GM12878 (cell line): ENCODE measurements at regions of chr1 and their contacts with region 1.

Region 1: DNA sequence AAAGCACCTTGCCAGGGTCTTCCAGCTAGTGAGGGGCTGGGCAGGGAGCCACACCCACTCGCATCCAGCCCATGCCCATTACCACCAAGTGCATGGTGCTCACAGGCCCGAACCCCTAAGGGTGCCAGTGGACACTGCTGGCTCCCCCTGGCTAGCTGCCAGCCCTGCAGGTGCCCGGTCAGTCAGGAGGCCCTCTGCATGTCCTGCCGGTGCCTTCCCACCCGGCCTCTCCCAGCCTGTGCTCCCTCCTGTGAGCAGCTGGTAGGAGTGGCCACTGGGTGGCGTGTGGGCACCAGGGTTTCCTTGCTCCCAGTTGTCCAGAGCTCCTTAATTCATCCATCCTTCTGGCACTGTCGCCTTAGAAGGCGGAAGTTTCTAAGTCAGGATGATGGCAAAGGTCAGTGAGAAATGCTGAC is 33.4 kb downstream of the QSOX1 start:
- DNase-seq: no peak
- ATAC-seq: peak; percentile 81
- H3K4me3 ChIP-seq: no peak overlapping the region
- H3K27ac ChIP-seq: no peak overlapping the region
- H3K4me1 ChIP-seq: no peaks in the 10 kb centered on the region
- H3K27me3 ChIP-seq: no peaks in the 10 kb centered on the region
- CTCF ChIP-seq: peak; percentile 51 to 65 (median 54); a peak in 5 of 6 replicates
- EP300 ChIP-seq: no peak
- POLR2A ChIP-seq: no peak
- RAD21 ChIP-seq: peak; percentile 73

Region 2: DNA sequence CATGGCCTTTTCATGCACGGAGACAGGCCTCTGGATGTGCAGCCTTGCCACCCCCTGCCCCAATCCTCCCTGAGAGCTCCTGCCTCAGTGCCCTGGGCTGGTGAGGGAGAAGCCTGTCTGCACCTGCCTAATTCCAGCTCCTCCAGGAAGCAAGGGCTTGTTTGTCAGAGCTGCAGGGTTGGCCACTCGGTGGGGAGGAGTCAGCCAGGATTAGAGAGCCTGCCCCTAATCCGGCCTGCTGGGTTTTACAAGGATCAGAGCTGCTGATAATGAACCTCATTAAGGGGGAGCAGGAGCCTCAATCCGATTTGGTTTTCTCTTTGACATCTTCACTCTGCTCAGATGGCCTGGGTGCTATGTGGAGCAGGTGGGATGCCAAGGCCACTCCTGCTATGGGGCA is 10.1 kb after region 1 on chr1:
- CTCF ChIA-PET with region 1: interaction called, 10 read pairs
- POLR2A ChIA-PET with region 1: no interaction called
- RAD21 ChIA-PET with region 1: no interaction called
- SMC1A ChIA-PET with region 1: interaction called, 4 read pairs
- in situ Hi-C with region 1: no loop called
- intact Hi-C with region 1: no loop called
- DNase-seq: no peak
- ATAC-seq: no peak
- H3K4me3 ChIP-seq: no peak overlapping the region
- H3K27ac ChIP-seq: no peak overlapping the region
- H3K4me1 ChIP-seq: no peaks in the 10 kb centered on the region
- H3K27me3 ChIP-seq: no peaks in the 10 kb centered on the region
- CTCF ChIP-seq: no peak
- EP300 ChIP-seq: no peak
- POLR2A ChIP-seq: no peak
- RAD21 ChIP-seq: no peak

Region 3: DNA sequence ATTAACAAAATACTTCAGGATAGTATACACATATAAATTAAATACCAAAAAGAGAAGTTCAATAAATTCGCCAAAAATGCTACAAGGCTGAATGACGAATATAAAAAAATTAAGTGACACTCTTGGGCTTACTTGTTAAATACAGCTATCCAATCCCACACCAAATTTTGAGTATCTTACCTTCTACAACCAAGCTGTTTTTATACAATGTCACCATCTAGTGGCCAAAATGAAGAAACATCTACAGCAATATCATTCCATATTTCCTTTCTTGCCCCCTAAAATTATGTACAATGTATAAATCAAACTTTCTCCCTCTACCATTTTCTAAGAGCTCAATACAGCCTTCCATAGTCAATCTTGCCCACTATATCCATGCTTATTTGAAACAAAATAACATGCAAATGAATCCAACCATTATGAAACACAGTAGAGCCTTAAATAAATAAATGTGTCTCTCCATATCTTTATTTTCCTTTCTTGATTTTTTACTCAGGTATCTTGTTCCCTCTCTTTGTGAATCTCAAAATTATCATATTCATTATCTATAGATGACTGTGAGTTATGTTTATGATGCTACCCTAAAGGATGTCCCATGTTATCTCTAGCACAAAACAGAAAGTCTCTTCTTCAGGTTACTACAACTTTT is 228.0 kb after region 1 on chr1:
- CTCF ChIA-PET with region 1: interaction called, 16 read pairs
- POLR2A ChIA-PET with region 1: no interaction called
- RAD21 ChIA-PET with region 1: interaction called, 4 read pairs
- SMC1A ChIA-PET with region 1: interaction called, 5 read pairs
- in situ Hi-C with region 1: no loop called
- intact Hi-C with region 1: loop called (anchors 1 kb)
- DNase-seq: peak; percentile 4
- ATAC-seq: peak; percentile 69
- H3K4me3 ChIP-seq: no peak overlapping the region
- H3K27ac ChIP-seq: no peak overlapping the region
- H3K4me1 ChIP-seq: no peaks in the 10 kb centered on the region
- H3K27me3 ChIP-seq: no peaks in the 10 kb centered on the region
- CTCF ChIP-seq: peak in 2 of 3 experiments; percentile 38 to 42; a peak in 3 of 6 replicates
- EP300 ChIP-seq: no peak
- POLR2A ChIP-seq: no peak
- RAD21 ChIP-seq: peak; percentile 45